Activated CD4-positive, alpha-beta memory T cell treated with anti-CD3 and anti-CD28 coated beads for 36 hours (primary cell): ENCODE measurements at regions of chr16 and their contacts with region 1.

Region 1: GRCh38 chr16:25126820-25127232 is 15.3 kb downstream of the LCMT1 start:
- DNase-seq: peak; percentile 76
- H3K4me3 Mint-ChIP-seq: no peak overlapping the region
- H3K27ac Mint-ChIP-seq: peak overlapping the region; percentile 48
- H3K4me1 Mint-ChIP-seq: peaks cover 32% of the 10 kb centered on the region
- H3K27me3 Mint-ChIP-seq: no peaks in the 10 kb centered on the region

Region 2: GRCh38 chr16:24235806-24236205 is 891.0 kb before region 1 on chr16:
- CTCF ChIA-PET with region 1: no interaction called
- POLR2A ChIA-PET with region 1: no interaction called
- intact Hi-C with region 1: no loop called
- DNase-seq: no peak
- H3K4me3 Mint-ChIP-seq: no peak overlapping the region
- H3K27ac Mint-ChIP-seq: no peak overlapping the region
- H3K4me1 Mint-ChIP-seq: no peaks in the 10 kb centered on the region
- H3K27me3 Mint-ChIP-seq: peaks cover 13% of the 10 kb centered on the region

Region 3: GRCh38 chr16:25093208-25094061 is 33.4 kb before region 1 on chr16:
- CTCF ChIA-PET with region 1: no interaction called
- POLR2A ChIA-PET with region 1: no interaction called
- intact Hi-C with region 1: loop called (anchors 1 kb)
- DNase-seq: peak; percentile 31
- H3K4me3 Mint-ChIP-seq: peak overlapping the region; percentile 14
- H3K27ac Mint-ChIP-seq: peak overlapping the region; percentile 68
- H3K4me1 Mint-ChIP-seq: peaks cover 22% of the 10 kb centered on the region
- H3K27me3 Mint-ChIP-seq: no peaks in the 10 kb centered on the region

Region 4: GRCh38 chr16:25155553-25156460 is 29.0 kb after region 1 on chr16:
- CTCF ChIA-PET with region 1: no interaction called
- POLR2A ChIA-PET with region 1: interaction called, 3 read pairs
- intact Hi-C with region 1: loop called (anchors 2 kb)
- DNase-seq: peak; percentile 65
- H3K4me3 Mint-ChIP-seq: no peak overlapping the region
- H3K27ac Mint-ChIP-seq: peak overlapping the region; percentile 76
- H3K4me1 Mint-ChIP-seq: peaks cover 13% of the 10 kb centered on the region
- H3K27me3 Mint-ChIP-seq: no peaks in the 10 kb centered on the region

Region 5: GRCh38 chr16:25177831-25178688 is 51.2 kb after region 1 on chr16:
- CTCF ChIA-PET with region 1: interaction called, 5 read pairs
- POLR2A ChIA-PET with region 1: no interaction called
- intact Hi-C with region 1: loop called (anchors 2 kb)
- DNase-seq: no peak
- H3K4me3 Mint-ChIP-seq: no peak overlapping the region
- H3K27ac Mint-ChIP-seq: no peak overlapping the region
- H3K4me1 Mint-ChIP-seq: peaks cover 13% of the 10 kb centered on the region
- H3K27me3 Mint-ChIP-seq: no peaks in the 10 kb centered on the region

Region 6: DNA sequence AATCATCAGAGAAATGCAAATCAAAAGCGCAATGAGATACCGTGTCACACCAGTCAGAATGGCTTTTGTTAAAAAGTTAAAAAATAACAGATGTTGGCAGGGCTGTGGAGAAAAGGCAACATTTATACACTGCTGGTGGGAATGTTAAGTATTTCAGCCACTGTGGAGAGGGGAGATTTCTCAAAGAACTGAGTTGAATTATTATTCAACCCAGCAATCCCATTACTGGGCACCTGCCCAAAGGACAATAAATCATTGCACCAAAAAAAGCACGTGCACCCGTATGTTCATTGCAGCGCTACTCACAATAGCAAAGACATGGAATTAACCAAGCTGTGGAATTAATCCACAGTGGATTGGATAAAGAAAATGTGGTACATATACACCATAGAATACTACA is 769.6 kb after region 1 on chr16:
- CTCF ChIA-PET with region 1: no interaction called
- POLR2A ChIA-PET with region 1: no interaction called
- intact Hi-C with region 1: no loop called
- DNase-seq: no peak
- H3K4me3 Mint-ChIP-seq: no peak overlapping the region
- H3K27ac Mint-ChIP-seq: no peak overlapping the region
- H3K4me1 Mint-ChIP-seq: no peaks in the 10 kb centered on the region
- H3K27me3 Mint-ChIP-seq: peaks cover 18% of the 10 kb centered on the region